Ascending aorta (tissue), 2 donors: ENCODE measurements at regions of chr1 and their contacts with region 1.

Region 1: DNA sequence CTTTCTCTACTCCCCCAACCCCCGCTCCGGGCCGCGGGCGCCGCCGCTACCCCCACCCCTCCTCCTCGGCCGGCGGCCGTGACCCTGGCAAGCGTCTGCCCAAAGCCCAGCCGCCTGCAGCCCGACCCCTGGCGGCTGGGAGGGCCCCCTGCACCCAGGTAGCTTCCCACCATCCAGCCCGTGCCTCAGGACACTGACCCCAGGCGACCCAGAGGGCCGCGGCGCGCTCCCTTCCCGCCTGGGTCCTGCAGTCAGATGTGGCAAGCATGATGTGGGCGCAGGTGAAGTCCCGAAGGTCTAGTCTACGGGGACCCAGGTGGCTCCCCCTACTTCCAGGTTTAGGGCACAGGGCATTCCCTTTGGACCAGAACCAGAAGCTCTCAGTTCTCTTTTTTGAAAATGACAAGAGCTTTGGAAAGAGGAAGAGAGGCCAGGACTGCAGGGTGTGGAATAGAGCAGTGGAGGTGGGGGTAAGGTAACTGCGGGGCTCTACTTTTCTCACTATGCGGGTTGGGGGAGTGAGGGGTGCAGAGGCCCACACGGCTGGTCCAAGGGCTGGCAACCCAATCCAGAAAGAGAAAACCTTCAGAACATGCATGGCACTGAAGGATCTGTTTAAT is at the start of gene DENND4B:
- DNase-seq: peak; percentile 21 to 91
- H3K4me3 ChIP-seq: peak within 1 kb of the TSS; percentile 93 to 99
- H3K27ac ChIP-seq: peak within 1 kb of the TSS; percentile 89 to 98
- H3K4me1 ChIP-seq: peaks cover 4 to 9% of the 10 kb centered on the region in 2 donors
- H3K27me3 ChIP-seq: no peaks in the 10 kb centered on the region
- CTCF ChIP-seq: peak; percentile 93 to 99 (median 97)
- total RNA-seq, gene DENND4B: 80.0 TPM

Region 2: DNA sequence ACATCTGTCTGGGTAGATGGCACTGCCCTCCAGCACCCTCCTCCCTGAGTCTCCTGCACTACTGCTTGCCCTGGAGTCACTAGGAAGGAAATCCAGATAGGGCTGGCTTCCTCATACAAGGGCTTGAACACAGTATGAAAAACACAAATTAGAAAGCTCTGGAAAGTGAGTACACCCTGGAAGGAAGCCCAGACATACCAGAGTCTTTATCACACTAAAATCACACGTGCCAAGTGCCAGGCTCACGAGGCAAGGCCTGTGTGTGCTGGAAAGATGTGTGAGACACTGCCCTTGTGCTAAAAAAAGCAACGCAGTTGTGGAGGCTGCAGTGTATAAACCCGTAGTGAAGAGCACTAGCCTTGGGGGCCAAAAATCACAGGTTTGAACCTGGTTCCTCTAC is 458.0 kb before region 1 on chr1:
- intact Hi-C with region 1: loop called (anchors 5 kb)
- DNase-seq: peak; percentile 54 to 94
- H3K4me3 ChIP-seq: no peak overlapping the region
- H3K27ac ChIP-seq: peak overlapping the region; percentile 95 to 97
- H3K4me1 ChIP-seq: peaks cover 18 to 50% of the 10 kb centered on the region in 2 donors
- H3K27me3 ChIP-seq: no peaks in the 10 kb centered on the region
- CTCF ChIP-seq: no peak

Region 3: DNA sequence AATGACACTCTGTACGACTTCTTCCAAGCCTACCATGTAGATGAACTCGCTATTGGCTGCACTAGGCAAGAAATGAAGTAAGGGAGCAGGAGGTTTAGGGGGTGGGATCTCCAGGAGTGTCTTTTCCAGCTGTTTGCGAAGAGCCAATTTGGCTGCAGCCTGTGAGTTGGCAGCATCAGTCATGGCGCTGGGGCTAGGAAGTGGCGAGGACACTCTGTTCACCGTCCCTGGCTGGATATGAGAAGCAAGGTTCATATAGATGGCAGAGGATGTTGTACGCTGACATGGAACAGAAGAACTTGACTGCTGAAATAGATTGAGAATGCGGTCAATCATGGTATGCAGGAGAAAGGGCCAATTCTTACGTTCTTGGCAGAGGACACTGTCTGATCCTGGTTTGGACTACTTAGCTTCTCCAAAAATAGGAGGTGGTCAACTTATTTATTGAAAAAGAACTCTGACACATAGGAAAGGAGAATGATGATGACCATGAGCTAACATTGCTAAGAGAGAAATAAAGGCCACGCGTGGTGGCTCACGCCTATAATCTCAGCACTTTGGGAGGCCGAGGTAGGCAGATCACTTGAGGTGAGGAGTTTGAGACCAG is 130.3 kb before region 1 on chr1:
- intact Hi-C with region 1: loop called (anchors 2 kb)
- DNase-seq: no peak
- H3K4me3 ChIP-seq: no peak overlapping the region
- H3K27ac ChIP-seq: peak overlapping the region; percentile 11 to 16
- H3K4me1 ChIP-seq: no peaks in the 10 kb centered on the region
- H3K27me3 ChIP-seq: no peaks in the 10 kb centered on the region
- CTCF ChIP-seq: no peak

Region 4: DNA sequence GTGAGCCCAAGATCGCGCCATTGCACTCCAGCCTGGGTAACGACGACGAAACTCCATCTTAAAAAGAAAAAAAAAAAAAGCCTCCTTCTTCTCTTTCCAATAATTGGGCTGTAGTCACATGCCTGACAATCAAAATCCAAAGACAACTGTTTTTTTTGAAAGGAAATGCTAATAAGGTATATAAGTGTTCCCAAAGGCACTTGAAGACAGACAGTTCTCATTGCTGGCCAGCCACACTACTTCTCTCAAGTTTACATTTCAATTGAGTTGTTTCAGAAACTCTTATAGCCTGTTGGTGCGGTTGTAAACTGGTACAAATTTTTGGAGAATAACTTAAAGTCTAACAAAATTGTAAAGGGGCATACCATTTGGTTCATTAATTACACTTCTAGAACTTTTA is 47.2 kb before region 1 on chr1:
- intact Hi-C with region 1: no loop called
- DNase-seq: no peak
- H3K4me3 ChIP-seq: no peak overlapping the region
- H3K27ac ChIP-seq: no peak overlapping the region
- H3K4me1 ChIP-seq: peaks cover 0 to 7% of the 10 kb centered on the region in 2 donors
- H3K27me3 ChIP-seq: no peaks in the 10 kb centered on the region
- CTCF ChIP-seq: no peak

Region 5: DNA sequence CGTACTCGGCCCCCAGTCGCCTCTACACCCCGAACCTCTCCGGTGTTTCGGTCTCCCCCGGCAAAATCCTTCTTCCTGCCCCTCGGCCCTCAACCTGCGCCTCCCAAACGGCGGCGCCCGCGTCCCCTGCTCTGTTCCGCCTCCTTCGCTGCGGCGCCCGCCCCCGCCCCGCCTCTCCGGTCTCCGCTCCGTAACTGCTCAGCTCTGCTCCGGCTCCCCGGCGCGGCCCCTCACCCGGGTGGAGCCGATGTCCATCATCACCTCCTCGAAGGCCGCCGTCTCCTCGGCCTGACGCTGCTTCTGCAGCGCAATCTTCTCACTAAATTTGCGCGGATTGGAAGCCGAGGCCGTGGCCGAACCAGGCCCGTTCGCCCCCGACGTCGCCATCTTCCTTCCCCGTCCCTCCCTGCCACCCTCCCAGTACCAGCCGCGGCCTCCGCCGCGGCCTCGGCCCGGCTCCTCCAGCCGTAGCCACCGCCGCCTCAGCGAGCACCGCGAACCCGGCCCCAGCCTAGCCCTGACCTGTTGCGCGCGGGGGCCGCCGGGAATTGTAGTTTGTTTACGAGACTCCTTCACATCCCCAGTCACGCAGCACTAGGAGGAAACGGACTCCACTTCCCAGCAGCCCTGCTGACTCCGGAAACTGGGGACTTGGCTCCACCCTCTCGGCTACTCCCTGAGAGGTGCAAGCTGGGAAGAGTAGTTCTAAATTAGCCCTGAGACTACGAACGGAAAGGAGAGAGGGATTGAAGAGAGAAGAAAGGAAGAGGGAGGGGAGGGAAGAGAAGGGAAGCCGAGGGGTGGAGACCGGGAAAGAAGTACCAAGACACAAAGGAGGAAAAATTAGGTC is 11.6 kb after region 1 on chr1 and contains the start of gene CRTC2:
- intact Hi-C with region 1: loop called (anchors 1 kb)
- DNase-seq: peak; percentile 98 to 100
- H3K4me3 ChIP-seq: peak within 1 kb of the TSS; percentile 87 to 97
- H3K27ac ChIP-seq: peak within 1 kb of the TSS; percentile 91 to 97
- H3K4me1 ChIP-seq: peaks cover 17 to 38% of the 10 kb centered on the region in 2 donors
- H3K27me3 ChIP-seq: no peaks in the 10 kb centered on the region
- CTCF ChIP-seq: no peak
- total RNA-seq, gene CRTC2: 10.1 TPM

Region 6: DNA sequence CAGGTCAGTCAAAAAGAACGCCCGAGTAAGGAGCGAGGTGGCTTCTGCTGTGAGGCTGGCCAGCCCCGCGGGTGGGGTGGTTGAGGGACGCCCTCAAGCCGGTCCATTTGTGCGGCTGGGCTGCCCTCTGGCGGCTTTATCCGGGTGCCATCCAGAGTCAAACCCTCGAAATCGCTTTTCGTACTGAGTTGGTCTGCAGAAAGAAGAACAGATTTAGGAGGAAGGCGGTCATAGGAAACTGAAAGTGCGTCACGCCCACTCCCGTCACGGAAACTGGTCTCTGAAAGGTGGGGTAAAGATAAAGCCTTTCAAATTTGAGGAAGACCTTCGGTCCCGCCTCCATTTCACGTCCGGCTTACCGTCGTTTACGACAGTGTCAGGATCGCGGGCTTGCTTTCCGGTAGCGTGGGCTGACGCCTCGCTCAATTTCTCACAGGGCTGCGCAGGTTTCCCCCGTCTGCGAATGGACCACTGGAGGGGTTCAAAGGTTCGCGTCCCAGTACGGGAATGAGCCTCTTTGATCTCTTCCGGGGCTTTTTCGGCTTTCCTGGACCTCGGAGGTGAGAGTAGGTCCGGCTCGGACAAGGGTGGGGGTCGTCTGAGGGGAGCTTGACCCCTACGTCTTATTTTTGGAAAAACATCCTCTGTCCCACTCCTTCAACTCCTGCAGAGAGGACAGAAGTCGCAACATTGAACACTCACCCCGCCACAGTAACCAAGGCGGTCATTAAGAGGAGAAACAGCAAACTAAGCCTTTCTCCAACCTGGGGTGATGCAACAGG is 325.7 kb after region 1 on chr1 and contains the start of gene HAX1:
- intact Hi-C with region 1: loop called (anchors 1 kb)
- DNase-seq: peak; percentile 87 to 97
- H3K4me3 ChIP-seq: peak within 1 kb of the TSS; percentile 75 to 97
- H3K27ac ChIP-seq: peak within 1 kb of the TSS; percentile 81 to 96
- H3K4me1 ChIP-seq: peaks cover 0 to 5% of the 10 kb centered on the region in 2 donors
- H3K27me3 ChIP-seq: no peaks in the 10 kb centered on the region
- CTCF ChIP-seq: peak; percentile 75 to 90 (median 89)
- total RNA-seq, gene HAX1: 270 TPM